ENCODE measurements at regions of chr15 and their contacts with region 1.

Region 1: GRCh38 chr15:50908210-50909009 is at the start of gene AP4E1:
- DNase-seq: peak; percentile 93
- H3K4me3 Mint-ChIP-seq: peak within 1 kb of the TSS; percentile 97
- H3K27ac Mint-ChIP-seq: peak within 1 kb of the TSS; percentile 99
- H3K4me1 Mint-ChIP-seq: peaks cover 14% of the 10 kb centered on the region
- H3K27me3 Mint-ChIP-seq: no peaks in the 10 kb centered on the region
- total RNA-seq, gene AP4E1: 16.7 and 17.9 TPM in 2 replicates

Region 2: DNA sequence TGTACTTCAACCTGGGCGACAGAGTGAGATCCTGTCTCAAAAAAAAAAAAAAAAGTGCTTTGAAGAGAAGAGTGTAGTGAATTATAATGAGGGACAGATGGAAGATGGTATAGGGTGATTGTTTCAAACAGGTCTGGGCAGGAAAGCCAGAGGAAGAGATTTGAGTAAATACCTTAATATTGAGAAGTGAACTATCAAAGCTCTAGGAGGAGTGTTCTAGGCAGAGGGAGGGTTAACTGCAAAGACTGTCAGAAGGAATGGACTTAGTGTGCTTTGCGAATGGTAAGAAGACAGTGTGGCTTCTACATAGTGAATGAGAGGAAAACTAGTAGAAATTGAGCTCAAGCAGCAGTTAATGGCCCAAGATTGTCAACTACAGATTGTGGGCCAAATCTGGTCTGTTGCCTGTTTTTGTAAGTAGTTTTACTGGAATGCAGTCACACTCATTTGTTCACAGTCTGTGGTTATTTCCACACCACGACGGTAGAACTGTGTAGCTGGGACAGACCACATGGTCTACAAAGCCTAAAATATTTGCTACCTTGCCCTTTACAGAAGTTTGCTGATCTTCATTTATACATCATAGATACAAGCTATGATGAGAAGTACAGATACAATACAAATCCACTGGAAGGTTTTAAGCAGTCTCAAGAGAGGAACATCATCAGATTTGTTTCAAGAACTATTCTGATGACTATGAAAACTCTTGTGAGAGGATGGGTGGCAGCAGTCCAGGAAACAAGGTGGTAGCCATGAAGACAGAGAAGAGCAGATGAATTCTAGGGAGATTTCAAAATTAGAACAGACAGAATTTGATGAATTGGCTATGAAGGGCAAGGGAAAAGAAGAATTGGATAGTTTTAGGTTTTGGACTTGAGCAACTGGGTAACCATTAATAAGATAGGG is 345.4 kb before region 1 on chr15:
- intact Hi-C with region 1: loop called (anchors 2 kb)
- DNase-seq: no peak
- H3K4me3 Mint-ChIP-seq: peak overlapping the region; percentile 15
- H3K27ac Mint-ChIP-seq: peak overlapping the region; percentile 95
- H3K4me1 Mint-ChIP-seq: peaks cover 29% of the 10 kb centered on the region
- H3K27me3 Mint-ChIP-seq: no peaks in the 10 kb centered on the region

Region 3: DNA sequence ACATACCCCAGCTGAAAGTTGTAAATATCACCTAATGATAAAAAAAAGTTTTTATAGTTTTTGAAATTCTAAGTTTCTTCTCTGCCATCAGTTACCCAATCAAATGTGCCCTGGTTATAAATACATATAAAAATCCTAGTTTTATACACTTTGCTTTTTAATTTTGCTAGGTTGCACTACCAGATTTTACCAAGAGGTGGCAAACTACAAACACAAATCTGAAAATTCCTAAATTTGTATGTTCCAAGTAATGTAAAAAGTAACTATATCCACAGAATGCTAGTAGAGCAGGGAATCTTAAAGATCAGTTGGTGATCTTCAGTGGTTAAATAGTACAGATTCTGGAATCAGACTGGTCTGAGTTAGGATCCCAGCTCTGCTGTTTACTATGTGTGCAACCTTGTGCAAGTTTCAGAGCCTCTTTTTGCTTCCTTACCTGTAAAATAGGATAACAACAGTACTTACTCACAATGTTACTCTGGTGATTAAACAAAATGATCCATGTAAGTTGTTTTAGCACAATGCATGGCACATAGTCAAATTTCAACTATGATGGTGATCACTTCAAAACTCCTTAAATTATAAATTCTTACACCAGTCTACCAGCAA is 232.8 kb before region 1 on chr15:
- intact Hi-C with region 1: loop called (anchors 1 kb)
- DNase-seq: no peak
- H3K4me3 Mint-ChIP-seq: no peak overlapping the region
- H3K27ac Mint-ChIP-seq: no peak overlapping the region
- H3K4me1 Mint-ChIP-seq: peaks cover 7% of the 10 kb centered on the region
- H3K27me3 Mint-ChIP-seq: no peaks in the 10 kb centered on the region

Region 4: DNA sequence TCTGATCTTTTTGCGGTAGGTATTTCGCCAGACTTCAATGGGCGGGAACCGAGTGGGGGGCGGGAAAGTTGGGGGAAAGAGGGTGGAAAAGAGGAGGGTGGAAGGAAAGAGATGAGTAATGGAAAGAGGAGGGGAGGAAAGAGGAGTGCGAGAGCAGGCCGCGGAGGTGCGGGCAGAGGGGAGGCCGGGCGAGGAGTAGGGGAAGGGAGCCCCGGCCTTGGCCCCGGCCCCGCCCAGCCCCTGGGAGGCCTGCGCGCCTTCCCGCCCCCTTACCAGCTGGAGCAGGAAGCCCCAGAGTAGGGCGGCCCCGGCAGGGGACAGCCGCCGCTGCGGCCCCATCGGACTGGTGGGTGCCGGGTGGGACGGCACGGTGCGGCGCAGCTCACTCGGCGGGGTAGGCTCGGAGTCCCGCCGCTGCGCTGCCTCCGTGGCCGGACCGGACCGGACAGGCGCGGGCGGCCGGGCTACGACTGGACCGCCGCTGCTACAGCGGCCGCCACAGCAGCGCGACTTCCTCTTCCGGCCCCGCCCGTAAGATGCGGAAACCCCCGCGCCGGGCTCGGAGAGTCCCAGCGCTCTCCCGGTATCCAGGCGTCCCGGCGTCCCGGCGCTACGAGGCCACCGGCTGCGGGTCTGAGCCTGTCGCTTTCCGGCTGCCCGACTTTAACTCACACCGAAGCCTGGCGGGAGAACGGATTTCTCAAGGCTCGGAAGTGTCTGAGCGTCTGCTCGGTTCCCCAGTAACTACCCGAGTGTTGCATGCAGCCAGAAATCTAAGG is 143.0 kb before region 1 on chr15 and contains the start of gene SPPL2A:
- intact Hi-C with region 1: loop called (anchors 1 kb)
- DNase-seq: peak; percentile 78
- H3K4me3 Mint-ChIP-seq: peak within 1 kb of the TSS; percentile 99
- H3K27ac Mint-ChIP-seq: peak within 1 kb of the TSS; percentile 99
- H3K4me1 Mint-ChIP-seq: peaks cover 48% of the 10 kb centered on the region
- H3K27me3 Mint-ChIP-seq: no peaks in the 10 kb centered on the region
- total RNA-seq, gene SPPL2A: 97.3 and 99.0 TPM in 2 replicates

Region 5: GRCh38 chr15:51243759-51244158 is 335.3 kb after region 1 on chr15:
- intact Hi-C with region 1: no loop called
- DNase-seq: no peak
- H3K4me3 Mint-ChIP-seq: no peak overlapping the region
- H3K27ac Mint-ChIP-seq: peak overlapping the region; percentile 78
- H3K4me1 Mint-ChIP-seq: peaks cover 41% of the 10 kb centered on the region
- H3K27me3 Mint-ChIP-seq: peaks cover 10% of the 10 kb centered on the region

Measured in activated T-helper 2 cell treated with anti-CD3 and anti-CD28 coated beads, Interferon-gamma antibody, Interleukin-2, Interleukin-4, amounts not matched to agents 10 μg/mL and 5 μg/mL and 100 μg/mL, durations not matched to agents 14 hours and 24 hours and 36 hours (primary cell).